ENCODE measurements at regions of chr9 and their contacts with region 1.

Region 1: GRCh38 chr9:121972501-121972981 is 120.6 kb downstream of the TTLL11 start:
- DNase-seq: peak; percentile 79
- H3K4me3 Mint-ChIP-seq: peak overlapping the region; percentile 36
- H3K27ac Mint-ChIP-seq: peak overlapping the region; percentile 89
- H3K4me1 Mint-ChIP-seq: peaks cover 29% of the 10 kb centered on the region
- H3K27me3 Mint-ChIP-seq: no peaks in the 10 kb centered on the region
- CTCF ChIP-seq: no peak

Region 2: GRCh38 chr9:121744002-121744686 is 228.4 kb before region 1 on chr9:
- CTCF ChIA-PET with region 1: interaction called, 3 read pairs
- intact Hi-C with region 1: loop called (anchors 5 kb)
- DNase-seq: peak; percentile 68
- H3K4me3 Mint-ChIP-seq: no peak overlapping the region
- H3K27ac Mint-ChIP-seq: no peak overlapping the region
- H3K4me1 Mint-ChIP-seq: peaks cover 33% of the 10 kb centered on the region
- H3K27me3 Mint-ChIP-seq: no peaks in the 10 kb centered on the region
- CTCF ChIP-seq: peak; percentile 27

Region 3: GRCh38 chr9:121902461-121903135 is 69.9 kb before region 1 on chr9:
- CTCF ChIA-PET with region 1: no interaction called
- intact Hi-C with region 1: loop called (anchors 10 kb)
- DNase-seq: peak; percentile 44
- H3K4me3 Mint-ChIP-seq: peak overlapping the region; percentile 43
- H3K27ac Mint-ChIP-seq: peak overlapping the region; percentile 93
- H3K4me1 Mint-ChIP-seq: peaks cover 38% of the 10 kb centered on the region
- H3K27me3 Mint-ChIP-seq: no peaks in the 10 kb centered on the region
- CTCF ChIP-seq: no peak

Region 4: GRCh38 chr9:122116040-122116439 is 143.5 kb after region 1 on chr9:
- CTCF ChIA-PET with region 1: no interaction called
- intact Hi-C with region 1: no loop called
- DNase-seq: no peak
- H3K4me3 Mint-ChIP-seq: no peak overlapping the region
- H3K27ac Mint-ChIP-seq: no peak overlapping the region
- H3K4me1 Mint-ChIP-seq: no peaks in the 10 kb centered on the region
- H3K27me3 Mint-ChIP-seq: peaks cover 46% of the 10 kb centered on the region
- CTCF ChIP-seq: no peak